Left colon (tissue), 2 donors: ENCODE measurements at regions of chr12 and their contacts with region 1.

Region 1: GRCh38 chr12:113030875-113031525 is 25.5 kb upstream of the DTX1 start:
- DNase-seq: no peak
- ATAC-seq: peak; percentile 42

Region 2: DNA sequence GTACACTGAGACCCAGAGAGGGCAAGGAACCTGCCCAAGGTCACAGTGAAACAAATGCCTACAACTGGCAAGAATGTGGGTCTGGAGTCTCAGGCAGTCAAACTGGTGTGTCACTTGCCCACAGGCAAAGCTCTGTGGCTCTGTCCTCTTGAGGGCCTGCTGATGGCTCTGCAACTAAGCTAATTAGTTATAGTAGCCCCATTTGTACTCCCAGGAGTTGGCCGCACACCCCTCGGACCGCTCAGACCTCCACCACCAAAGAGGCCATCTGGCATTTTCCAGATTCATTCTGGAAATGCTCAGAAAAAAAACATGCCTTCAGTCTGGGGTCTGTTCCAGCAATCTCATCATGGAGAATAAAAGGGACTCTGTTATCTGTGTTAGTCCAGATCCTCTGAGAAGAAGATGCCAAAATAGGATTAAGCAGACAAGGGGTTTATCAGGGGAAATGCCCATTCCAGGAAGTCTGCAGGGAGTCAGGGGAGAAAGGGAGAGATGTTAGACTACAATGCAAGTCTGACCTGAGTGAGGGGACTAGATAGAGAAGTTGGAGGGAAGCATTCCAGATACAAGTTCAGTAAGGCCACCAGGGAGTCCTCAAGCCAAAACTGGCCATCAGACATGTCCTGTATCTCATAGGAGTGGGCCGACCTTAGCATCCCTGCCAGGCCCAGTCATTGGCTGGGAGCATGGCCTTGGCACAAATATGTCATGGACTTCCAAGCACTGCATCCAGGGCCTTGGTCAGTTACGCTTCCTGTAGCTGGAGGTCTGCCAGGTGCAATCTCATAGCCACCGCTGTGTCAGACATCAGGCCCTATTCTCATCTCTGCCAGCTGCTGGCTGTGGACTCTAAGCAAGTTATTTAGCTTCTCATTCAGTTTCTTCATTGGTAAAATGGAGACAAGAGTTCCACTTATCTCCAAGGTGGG is 139.6 kb before region 1 on chr12:
- intact Hi-C with region 1: loop called in 1 of 2 experiments (anchors 10 kb)
- DNase-seq: no peak
- ATAC-seq: peak; percentile 46